ENCODE measurements at regions of chr9 and their contacts with region 1.

Region 1: DNA sequence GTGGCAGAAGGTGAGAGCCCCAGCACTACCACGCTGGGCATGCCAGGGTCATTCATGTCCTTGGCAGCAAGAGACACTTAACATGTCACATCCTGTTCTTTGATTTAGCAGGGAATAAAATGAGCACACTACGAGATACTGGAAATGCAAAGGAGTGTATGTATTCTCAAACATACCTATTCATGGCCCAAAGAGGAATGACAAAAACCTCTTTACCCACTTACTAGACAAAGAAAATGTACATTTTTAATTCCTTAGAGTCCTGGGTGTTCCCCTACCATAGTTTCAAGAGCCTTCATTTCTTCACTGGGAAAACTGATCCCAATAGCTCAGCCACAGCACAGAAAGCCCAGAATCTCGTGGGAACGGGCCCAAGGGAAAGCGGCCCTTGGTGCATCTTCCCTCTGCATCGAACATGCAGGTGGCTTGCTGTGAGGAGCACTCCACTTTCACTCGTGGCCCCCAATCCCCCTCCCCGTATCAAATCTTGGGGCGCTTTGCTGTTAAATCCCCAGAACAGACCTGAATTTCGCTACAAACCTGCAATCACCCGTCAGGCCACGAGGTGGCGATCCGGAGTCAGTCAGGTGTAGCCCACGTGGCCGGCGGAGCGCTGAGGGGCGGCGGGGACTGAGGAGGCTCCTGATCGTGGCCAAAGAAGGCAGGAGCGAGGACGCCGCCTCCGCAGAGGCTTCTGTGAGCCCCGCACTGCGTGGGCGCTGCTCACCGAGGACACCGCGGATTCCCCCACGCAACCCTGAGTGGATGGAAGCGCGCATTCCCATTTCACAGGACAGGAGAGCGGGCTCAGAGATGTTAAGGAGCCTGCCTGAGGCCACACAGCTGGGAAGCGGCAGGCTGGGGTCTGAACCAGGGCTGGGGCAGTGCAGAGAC is 91.4 kb downstream of the LMX1B start:
- DNase-seq: peak; percentile 74 to 88 (median 81)
- H3K4me3 ChIP-seq: no peak overlapping the region
- H3K4me3 Mint-ChIP-seq: peak overlapping the region in 6 of 7 donors; percentile 0 to 69 (median 23)
- H3K27ac ChIP-seq: no peak overlapping the region
- H3K27ac Mint-ChIP-seq: peak overlapping the region in 3 of 8 donors; percentile 7 to 73 (median 47)
- H3K4me1 ChIP-seq: peaks cover 14% of the 10 kb centered on the region
- H3K4me1 Mint-ChIP-seq: peaks cover 13 to 23% (median 16%) of the 10 kb centered on the region in 3 donors
- H3K27me3 ChIP-seq: peaks cover 17% of the 10 kb centered on the region
- H3K27me3 Mint-ChIP-seq: peaks cover 19 to 49% of the 10 kb centered on the region in 2 donors

Region 2: DNA sequence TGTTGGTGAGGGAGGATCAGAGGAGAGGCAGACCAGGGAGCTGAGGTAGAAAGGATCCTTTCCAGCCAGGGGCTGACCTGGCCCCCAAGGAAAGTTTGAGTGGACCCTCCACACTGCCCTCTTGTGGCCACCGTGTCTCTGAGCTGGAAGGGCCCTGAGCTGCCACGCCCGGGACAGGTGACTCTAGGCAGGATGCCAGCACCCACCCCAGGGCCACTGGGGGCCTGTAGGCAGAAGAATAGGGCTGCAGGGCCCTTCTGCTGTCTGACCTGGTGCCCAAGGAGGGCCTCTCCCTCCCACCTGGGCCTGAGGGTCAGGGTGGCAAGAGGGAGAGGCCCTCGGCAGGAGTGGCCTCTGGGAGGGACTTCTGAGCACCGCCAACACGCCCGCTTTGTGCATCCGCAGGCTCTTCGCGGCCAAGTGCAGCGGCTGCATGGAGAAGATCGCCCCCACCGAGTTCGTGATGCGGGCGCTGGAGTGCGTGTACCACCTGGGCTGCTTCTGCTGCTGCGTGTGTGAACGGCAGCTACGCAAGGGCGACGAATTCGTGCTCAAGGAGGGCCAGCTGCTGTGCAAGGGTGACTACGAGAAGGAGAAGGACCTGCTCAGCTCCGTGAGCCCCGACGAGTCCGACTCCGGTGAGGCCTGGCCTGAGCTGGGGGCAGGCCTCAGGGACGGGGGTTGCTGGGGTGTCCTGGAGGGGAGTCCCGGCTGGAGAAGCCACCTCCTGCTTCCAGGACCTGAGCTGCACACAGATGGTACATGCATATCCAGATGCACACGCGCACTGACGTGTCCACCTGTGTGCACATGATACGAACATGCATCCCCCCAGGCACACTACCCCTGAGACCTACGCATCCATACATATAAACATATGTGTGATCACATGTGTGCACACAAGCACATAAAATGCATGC is 14.4 kb before region 1 on chr9:
- CTCF ChIA-PET with region 1: interaction called, 22 read pairs
- POLR2A ChIA-PET with region 1: no interaction called
- DNase-seq: peak; percentile 22 to 59 (median 34)
- H3K4me3 ChIP-seq: no peak overlapping the region
- H3K4me3 Mint-ChIP-seq: no peak overlapping the region
- H3K27ac ChIP-seq: no peak overlapping the region
- H3K27ac Mint-ChIP-seq: no peak overlapping the region
- H3K4me1 ChIP-seq: no peaks in the 10 kb centered on the region
- H3K4me1 Mint-ChIP-seq: no peaks in the 10 kb centered on the region
- H3K27me3 ChIP-seq: peaks cover under 1% of the 10 kb centered on the region
- H3K27me3 Mint-ChIP-seq: peaks cover 14 to 49% of the 10 kb centered on the region in 2 donors

Region 3: GRCh38 chr9:126722252-126723078 is 17.3 kb after region 1 on chr9:
- CTCF ChIA-PET with region 1: interaction called, 39 read pairs
- POLR2A ChIA-PET with region 1: interaction called, 14 read pairs
- DNase-seq: peak; percentile 83 to 93 (median 88)
- H3K4me3 ChIP-seq: peak overlapping the region; percentile 83
- H3K4me3 Mint-ChIP-seq: peak overlapping the region; percentile 84 to 91 (median 89)
- H3K27ac ChIP-seq: peak overlapping the region; percentile 96
- H3K27ac Mint-ChIP-seq: peak overlapping the region; percentile 95 to 100 (median 99)
- H3K4me1 ChIP-seq: peaks cover 44% of the 10 kb centered on the region
- H3K4me1 Mint-ChIP-seq: peaks cover 43 to 51% (median 47%) of the 10 kb centered on the region in 3 donors
- H3K27me3 ChIP-seq: no peaks in the 10 kb centered on the region
- H3K27me3 Mint-ChIP-seq: no peaks in the 10 kb centered on the region

Region 4: GRCh38 chr9:126743041-126743440 is 37.9 kb after region 1 on chr9:
- CTCF ChIA-PET with region 1: interaction called, 39 read pairs
- POLR2A ChIA-PET with region 1: no interaction called
- DNase-seq: no peak
- H3K4me3 ChIP-seq: no peak overlapping the region
- H3K4me3 Mint-ChIP-seq: no peak overlapping the region
- H3K27ac ChIP-seq: no peak overlapping the region
- H3K27ac Mint-ChIP-seq: no peak overlapping the region
- H3K4me1 ChIP-seq: peaks cover 7% of the 10 kb centered on the region
- H3K4me1 Mint-ChIP-seq: peaks cover 7 to 16% (median 10%) of the 10 kb centered on the region in 3 donors
- H3K27me3 ChIP-seq: no peaks in the 10 kb centered on the region
- H3K27me3 Mint-ChIP-seq: peaks cover 0 to 3% of the 10 kb centered on the region in 2 donors

Region 5: DNA sequence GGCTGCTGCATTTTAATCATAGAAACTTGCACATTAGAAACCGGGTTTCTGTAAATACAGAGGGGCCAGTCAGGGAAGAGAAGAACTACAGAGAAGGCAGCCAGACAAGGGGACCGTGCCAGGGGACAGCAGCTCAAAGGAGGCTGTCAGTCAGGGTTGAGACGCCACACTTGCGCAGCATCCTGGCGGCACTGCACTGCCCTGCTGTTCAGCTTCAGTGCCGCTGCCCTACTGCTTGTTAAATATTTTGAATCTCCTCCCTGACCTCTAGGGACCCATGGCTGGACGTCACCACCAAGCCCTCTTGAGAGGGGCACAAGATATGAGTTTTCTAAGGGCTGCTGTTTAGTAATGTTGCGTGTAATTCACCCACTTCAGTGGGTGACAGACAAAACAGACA is 56.2 kb after region 1 on chr9:
- CTCF ChIA-PET with region 1: interaction called, 12 read pairs
- POLR2A ChIA-PET with region 1: no interaction called
- DNase-seq: no peak
- H3K4me3 ChIP-seq: no peak overlapping the region
- H3K4me3 Mint-ChIP-seq: no peak overlapping the region
- H3K27ac ChIP-seq: no peak overlapping the region
- H3K27ac Mint-ChIP-seq: no peak overlapping the region
- H3K4me1 ChIP-seq: no peaks in the 10 kb centered on the region
- H3K4me1 Mint-ChIP-seq: no peaks in the 10 kb centered on the region
- H3K27me3 ChIP-seq: no peaks in the 10 kb centered on the region
- H3K27me3 Mint-ChIP-seq: peaks cover 10 to 14% of the 10 kb centered on the region in 2 donors

Region 6: DNA sequence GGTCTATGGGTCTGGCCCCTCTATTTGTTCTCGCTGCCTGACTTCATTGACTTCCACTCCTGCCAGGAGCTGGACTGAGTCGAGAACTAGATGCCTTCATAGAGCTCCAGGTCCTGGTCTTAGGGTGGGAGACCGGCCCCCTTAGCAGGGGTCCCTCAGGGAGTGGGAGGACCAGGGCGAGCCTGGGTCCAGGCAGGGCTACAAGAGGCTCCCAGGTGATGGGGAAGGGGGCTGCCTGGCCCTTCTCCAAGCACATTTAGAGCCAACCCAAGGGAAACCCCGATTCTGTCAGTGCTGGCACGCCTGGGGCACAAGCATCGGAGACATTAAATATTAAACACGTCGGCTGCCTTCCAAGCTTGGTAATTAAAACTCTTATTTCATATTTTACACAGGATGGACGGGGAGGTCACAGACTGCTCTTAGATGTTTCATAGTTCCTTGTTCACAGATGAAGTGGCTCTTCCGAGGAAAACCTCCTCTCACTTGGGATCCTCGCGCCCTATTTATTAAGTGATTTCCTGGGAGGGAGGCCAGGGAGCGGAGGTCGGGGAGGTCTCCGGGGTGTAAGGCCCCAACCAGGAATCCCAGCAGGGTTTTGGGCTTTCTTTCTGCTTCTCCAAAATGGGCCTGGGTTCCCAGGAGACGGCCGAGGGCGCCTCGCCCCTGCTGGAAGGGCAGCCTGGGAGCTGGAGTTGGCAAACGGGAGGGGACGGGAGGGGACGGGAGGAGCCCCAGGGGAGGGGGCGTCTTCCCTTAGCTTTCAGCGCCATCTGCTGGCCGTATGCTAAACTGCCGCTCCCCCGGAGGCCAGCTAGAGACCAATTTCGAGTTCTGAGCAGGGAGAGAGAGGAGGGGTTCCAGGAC is 76.3 kb after region 1 on chr9:
- CTCF ChIA-PET with region 1: interaction called, 297 read pairs
- POLR2A ChIA-PET with region 1: interaction called, 10 read pairs
- DNase-seq: peak; percentile 63 to 86 (median 77)
- H3K4me3 ChIP-seq: no peak overlapping the region
- H3K4me3 Mint-ChIP-seq: no peak overlapping the region
- H3K27ac ChIP-seq: no peak overlapping the region
- H3K27ac Mint-ChIP-seq: peak overlapping the region in 1 of 8 donors; percentile 54
- H3K4me1 ChIP-seq: no peaks in the 10 kb centered on the region
- H3K4me1 Mint-ChIP-seq: no peaks in the 10 kb centered on the region
- H3K27me3 ChIP-seq: peaks cover 7% of the 10 kb centered on the region
- H3K27me3 Mint-ChIP-seq: peaks cover 17 to 42% of the 10 kb centered on the region in 2 donors

Region 7: DNA sequence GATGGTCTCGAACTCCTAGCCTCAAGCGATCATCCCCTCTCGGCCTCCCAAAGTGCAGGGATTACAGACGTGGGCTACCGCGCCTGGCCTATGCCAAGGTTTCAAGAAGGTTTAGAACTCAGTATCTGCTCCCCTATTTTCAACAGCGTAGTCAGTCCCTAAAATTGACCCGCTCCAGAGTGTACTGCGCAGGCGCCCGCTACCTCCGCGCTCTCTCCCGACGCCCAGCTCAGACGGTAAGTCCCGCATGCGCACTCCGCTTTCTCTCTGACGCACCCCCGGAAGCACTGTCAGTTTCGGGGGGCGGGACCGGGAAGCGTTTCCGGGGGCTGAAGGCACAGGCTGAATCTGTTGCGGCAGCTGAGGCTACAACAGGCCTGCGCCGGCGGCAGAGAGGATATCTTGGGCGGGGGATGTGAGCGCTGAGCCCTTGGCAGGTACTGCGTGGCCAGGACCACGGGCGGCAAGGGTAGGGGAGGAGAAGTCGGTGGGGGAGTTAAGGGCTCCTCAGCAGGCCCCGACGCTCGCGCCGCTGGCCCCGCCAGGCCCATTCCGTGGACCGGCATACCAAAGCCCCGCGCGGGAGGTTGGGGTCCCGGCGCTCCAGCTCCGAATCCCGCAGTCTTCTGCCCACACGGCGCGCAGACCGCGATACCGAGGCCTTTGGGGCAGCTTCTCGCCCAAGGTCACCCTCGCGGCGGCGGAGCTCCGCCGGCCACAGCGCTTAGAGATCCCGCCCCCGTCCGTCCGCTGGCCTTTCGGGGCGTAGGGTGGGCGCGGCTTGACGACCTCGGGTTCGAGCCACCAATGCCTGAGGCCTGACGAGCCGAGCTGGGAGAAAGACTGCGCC is 99.8 kb after region 1 on chr9 and contains the start of gene ZBTB43:
- CTCF ChIA-PET with region 1: interaction called, 13 read pairs
- POLR2A ChIA-PET with region 1: interaction called, 4 read pairs
- DNase-seq: peak; percentile 97 to 98 (median 98)
- H3K4me3 ChIP-seq: peak within 1 kb of the TSS; percentile 94
- H3K4me3 Mint-ChIP-seq: peak within 1 kb of the TSS; percentile 92 to 100 (median 95)
- H3K27ac ChIP-seq: peak within 1 kb of the TSS; percentile 96
- H3K27ac Mint-ChIP-seq: peak within 1 kb of the TSS; percentile 94 to 100 (median 99)
- H3K4me1 ChIP-seq: peaks cover 23% of the 10 kb centered on the region
- H3K4me1 Mint-ChIP-seq: peaks cover 39 to 55% (median 52%) of the 10 kb centered on the region in 3 donors
- H3K27me3 ChIP-seq: no peaks in the 10 kb centered on the region
- H3K27me3 Mint-ChIP-seq: peaks cover 0 to 2% of the 10 kb centered on the region in 2 donors
- total RNA-seq, gene ZBTB43: 21.8 to 22.8 TPM

Measured in CD8-positive, alpha-beta memory T cell (primary cell).